GM12878 (cell line): ENCODE measurements at regions of chr9 and their contacts with region 1.

Region 1: GRCh38 chr9:5582835-5583195 is 46.1 kb upstream of the RIC1 start:
- DNase-seq: peak; percentile 91
- ATAC-seq: peak; percentile 73
- H3K4me3 ChIP-seq: no peak overlapping the region
- H3K27ac ChIP-seq: peak overlapping the region; percentile 89
- H3K4me1 ChIP-seq: peaks cover 53% of the 10 kb centered on the region
- H3K27me3 ChIP-seq: no peaks in the 10 kb centered on the region
- CTCF ChIP-seq: no peak
- EP300 ChIP-seq: peak in 1 of 2 experiments; percentile 75; a peak in 3 of 4 replicates
- POLR2A ChIP-seq: peak; percentile 14; the same call in 1 of the 2 replicates
- RAD21 ChIP-seq: no peak

Region 2: GRCh38 chr9:5437254-5438216 is 145.3 kb before region 1 on chr9 and contains the start of gene PLGRKT:
- CTCF ChIA-PET with region 1: interaction called, 124 read pairs
- POLR2A ChIA-PET with region 1: interaction called, 31 read pairs
- RAD21 ChIA-PET with region 1: interaction called, 130 read pairs
- SMC1A ChIA-PET with region 1: interaction called, 187 read pairs
- in situ Hi-C with region 1: no loop called
- intact Hi-C with region 1: no loop called
- DNase-seq: peak; percentile 81
- ATAC-seq: peak; percentile 88
- H3K4me3 ChIP-seq: peak within 1 kb of the TSS; percentile 86
- H3K27ac ChIP-seq: peak within 1 kb of the TSS; percentile 96
- H3K4me1 ChIP-seq: peaks cover 7% of the 10 kb centered on the region
- H3K27me3 ChIP-seq: no peaks in the 10 kb centered on the region
- CTCF ChIP-seq: peak; percentile 17 to 31 (median 17); a peak in 3 of 6 replicates
- EP300 ChIP-seq: peak in 1 of 2 experiments; percentile 37; a peak in 1 of 4 replicates
- POLR2A ChIP-seq: peak; percentile 95
- RAD21 ChIP-seq: no peak
- polyA plus RNA-seq, gene PLGRKT: 62.2 to 64.4 TPM

Region 3: GRCh38 chr9:5466766-5467165 is 116.0 kb before region 1 on chr9:
- CTCF ChIA-PET with region 1: interaction called, 5 read pairs
- POLR2A ChIA-PET with region 1: interaction called, 3 read pairs
- RAD21 ChIA-PET with region 1: interaction called, 4 read pairs
- SMC1A ChIA-PET with region 1: interaction called, 74 read pairs
- in situ Hi-C with region 1: no loop called
- intact Hi-C with region 1: no loop called
- DNase-seq: no peak
- ATAC-seq: no peak
- H3K4me3 ChIP-seq: no peak overlapping the region
- H3K27ac ChIP-seq: no peak overlapping the region
- H3K4me1 ChIP-seq: peaks cover 26% of the 10 kb centered on the region
- H3K27me3 ChIP-seq: no peaks in the 10 kb centered on the region
- CTCF ChIP-seq: no peak
- EP300 ChIP-seq: no peak
- POLR2A ChIP-seq: no peak
- RAD21 ChIP-seq: no peak

Region 4: DNA sequence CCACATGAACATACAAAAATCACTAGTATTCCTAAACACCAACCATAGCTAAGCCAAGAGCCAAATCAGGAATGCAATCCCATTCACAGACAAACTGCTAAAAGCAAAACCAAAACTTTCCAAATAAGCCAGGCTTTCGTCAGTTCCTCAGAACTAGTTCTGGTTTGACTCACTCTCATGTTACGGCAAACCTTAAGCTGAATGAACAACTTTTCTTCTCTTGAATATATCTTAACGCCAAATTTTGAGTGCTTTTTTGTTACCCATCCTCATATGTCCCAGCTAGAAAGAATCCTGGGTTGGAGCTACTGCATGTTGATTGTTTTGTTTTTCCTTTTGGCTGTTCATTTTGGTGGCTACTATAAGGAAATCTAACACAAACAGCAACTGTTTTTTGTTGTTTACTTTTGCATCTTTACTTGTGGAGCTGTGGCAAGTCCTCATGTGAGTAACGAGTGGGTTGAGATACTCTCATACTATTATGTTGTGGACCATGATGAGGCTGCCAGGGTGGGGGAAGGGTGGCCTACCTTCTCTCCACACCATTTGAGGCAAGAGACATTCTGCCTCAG is 72.4 kb before region 1 on chr9 and contains the start of gene PDCD1LG2:
- CTCF ChIA-PET with region 1: interaction called, 32 read pairs
- POLR2A ChIA-PET with region 1: interaction called, 61 read pairs
- RAD21 ChIA-PET with region 1: interaction called, 146 read pairs
- SMC1A ChIA-PET with region 1: interaction called, 311 read pairs
- in situ Hi-C with region 1: no loop called
- intact Hi-C with region 1: loop called (anchors 2 kb)
- DNase-seq: peak; percentile 76
- ATAC-seq: peak; percentile 71
- H3K4me3 ChIP-seq: peak within 1 kb of the TSS; percentile 49
- H3K27ac ChIP-seq: peak within 1 kb of the TSS; percentile 82
- H3K4me1 ChIP-seq: peaks cover 39% of the 10 kb centered on the region
- H3K27me3 ChIP-seq: no peaks in the 10 kb centered on the region
- CTCF ChIP-seq: no peak
- EP300 ChIP-seq: peak in 1 of 2 experiments; percentile 89; a peak in 2 of 4 replicates
- POLR2A ChIP-seq: no peak
- RAD21 ChIP-seq: no peak
- polyA plus RNA-seq, gene PDCD1LG2: 1.5 to 2.5 TPM

Region 5: DNA sequence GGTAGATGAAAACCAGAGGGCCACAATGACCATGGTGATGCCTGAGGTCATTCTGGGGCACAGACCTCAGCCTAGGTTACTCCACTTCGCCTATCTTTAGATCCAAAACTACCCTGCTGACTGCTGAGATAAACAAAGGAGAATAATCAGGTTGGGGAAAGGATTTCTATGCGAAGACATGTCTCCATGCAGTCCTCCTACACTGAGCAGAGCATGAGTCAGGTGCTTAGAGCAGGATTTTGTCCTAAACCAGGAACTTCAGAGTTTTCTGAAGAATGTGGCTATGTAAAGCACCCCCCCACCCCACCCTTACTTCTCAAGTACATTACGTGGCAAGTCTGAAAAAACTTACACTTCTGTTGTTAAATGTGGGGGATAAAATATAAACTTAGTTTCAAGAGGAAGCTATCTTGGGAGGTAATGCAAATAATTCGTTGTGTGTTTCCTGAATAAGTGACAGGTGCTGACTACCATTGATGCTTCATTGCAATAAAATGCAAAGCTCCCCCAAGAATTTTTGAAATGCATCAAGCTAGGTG is 53.1 kb before region 1 on chr9:
- CTCF ChIA-PET with region 1: interaction called, 12 read pairs
- POLR2A ChIA-PET with region 1: interaction called, 19 read pairs
- RAD21 ChIA-PET with region 1: interaction called, 41 read pairs
- SMC1A ChIA-PET with region 1: interaction called, 57 read pairs
- in situ Hi-C with region 1: no loop called
- intact Hi-C with region 1: loop called (anchors 1 kb)
- DNase-seq: peak; percentile 73
- ATAC-seq: peak; percentile 62
- H3K4me3 ChIP-seq: peak overlapping the region; percentile 47; the same call in 1 of the 2 replicates
- H3K27ac ChIP-seq: peak overlapping the region; percentile 93
- H3K4me1 ChIP-seq: peaks cover 43% of the 10 kb centered on the region
- H3K27me3 ChIP-seq: no peaks in the 10 kb centered on the region
- CTCF ChIP-seq: no peak
- EP300 ChIP-seq: peak; percentile 9 to 59; a peak in 1 of 4 replicates
- POLR2A ChIP-seq: no peak
- RAD21 ChIP-seq: 0 out of 2 replicates have a peak, but pooled peaks have one; percentile 0

Region 6: GRCh38 chr9:5628530-5629311 is 45.9 kb after region 1 on chr9 and contains the start of gene RIC1:
- CTCF ChIA-PET with region 1: interaction called, 5 read pairs
- POLR2A ChIA-PET with region 1: interaction called, 6 read pairs
- RAD21 ChIA-PET with region 1: interaction called, 28 read pairs
- SMC1A ChIA-PET with region 1: interaction called, 20 read pairs
- in situ Hi-C with region 1: no loop called
- intact Hi-C with region 1: no loop called
- DNase-seq: peak; percentile 67
- ATAC-seq: peak; percentile 69
- H3K4me3 ChIP-seq: peak within 1 kb of the TSS; percentile 98
- H3K27ac ChIP-seq: peak within 1 kb of the TSS; percentile 78
- H3K4me1 ChIP-seq: peaks cover 33% of the 10 kb centered on the region
- H3K27me3 ChIP-seq: no peaks in the 10 kb centered on the region
- CTCF ChIP-seq: no peak
- EP300 ChIP-seq: 0 out of 4 replicates have a peak, but pooled peaks of 1 of the 2 experiments have one; percentile 9
- POLR2A ChIP-seq: peak; percentile 84
- RAD21 ChIP-seq: no peak
- polyA plus RNA-seq, gene RIC1: 6.2 to 7.1 TPM